ENCODE measurements at regions of chr3 and their contacts with region 1.

Region 1: GRCh38 chr3:124467980-124468902 is 262.0 kb upstream of the UMPS start:
- DNase-seq: peak in 1 of 2 donors; percentile 33
- ATAC-seq: peak in 7 of 8 donors; percentile 65 to 82 (median 75)
- H3K4me3 ChIP-seq: no peak overlapping the region
- H3K27ac ChIP-seq: no peak overlapping the region
- H3K4me1 ChIP-seq: no peaks in the 10 kb centered on the region
- H3K27me3 ChIP-seq: no peaks in the 10 kb centered on the region
- CTCF ChIP-seq: peak; percentile 88 to 97 (median 96)

Region 2: DNA sequence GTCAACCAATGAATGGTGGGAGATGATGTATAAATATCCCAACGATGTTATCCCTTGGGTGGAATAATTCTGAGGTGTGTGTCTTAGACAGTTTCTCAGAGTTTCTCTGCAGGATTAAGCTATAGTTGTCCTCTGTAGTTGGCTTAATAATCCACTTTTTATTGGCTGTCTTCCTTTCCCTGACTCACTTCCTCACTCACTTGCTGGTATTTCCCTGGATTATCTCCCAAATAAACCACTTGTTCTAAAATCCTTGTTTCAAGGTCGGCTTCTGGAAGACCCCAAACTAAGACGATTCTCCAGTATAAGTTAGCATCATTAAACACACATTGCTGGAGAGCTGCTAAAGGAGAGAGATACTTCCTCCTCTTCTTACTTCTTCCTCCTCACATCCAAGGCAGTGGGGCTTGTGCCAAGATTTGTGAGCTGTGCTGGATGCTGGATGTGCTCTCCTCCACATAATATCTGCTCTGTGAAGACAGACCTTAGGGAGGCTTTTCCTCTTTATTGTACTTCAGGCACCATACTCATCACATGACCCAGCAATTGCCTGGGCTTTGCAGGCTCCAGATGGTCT is 453.8 kb before region 1 on chr3:
- intact Hi-C with region 1: loop called in 9 of 10 experiments (anchors 1 to 5 kb)
- DNase-seq: no peak
- ATAC-seq: peak in 1 of 8 donors; percentile 37
- H3K4me3 ChIP-seq: no peak overlapping the region
- H3K27ac ChIP-seq: no peak overlapping the region
- H3K4me1 ChIP-seq: peaks cover 0 to 14% (median 0%) of the 10 kb centered on the region in 9 donors
- H3K27me3 ChIP-seq: no peaks in the 10 kb centered on the region
- CTCF ChIP-seq: no peak

Region 3: DNA sequence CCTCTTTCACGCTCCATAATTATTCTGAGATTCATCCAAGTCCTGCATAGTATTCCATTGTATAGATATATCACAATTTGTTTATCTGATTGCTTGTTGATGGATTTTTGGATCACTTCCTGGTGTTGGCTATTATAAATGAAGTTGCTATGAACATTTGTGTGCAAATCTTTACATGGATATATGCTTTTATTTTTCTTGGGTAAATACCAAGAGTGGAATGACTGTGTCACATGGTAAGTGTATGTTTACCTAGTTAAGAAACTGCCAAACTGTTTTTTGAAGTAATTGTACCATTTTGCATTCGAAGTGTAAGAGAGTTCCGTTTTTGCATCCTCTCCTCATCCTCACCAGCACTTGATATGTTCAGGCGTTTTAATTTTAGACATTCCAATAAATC is 441.7 kb before region 1 on chr3:
- intact Hi-C with region 1: loop called in 1 of 10 experiments (anchors 5 kb)
- DNase-seq: no peak
- ATAC-seq: no peak
- H3K4me3 ChIP-seq: no peak overlapping the region
- H3K27ac ChIP-seq: no peak overlapping the region
- H3K4me1 ChIP-seq: no peaks in the 10 kb centered on the region
- H3K27me3 ChIP-seq: peaks cover 0 to 48% (median 0%) of the 10 kb centered on the region in 7 donors
- CTCF ChIP-seq: no peak

Region 4: DNA sequence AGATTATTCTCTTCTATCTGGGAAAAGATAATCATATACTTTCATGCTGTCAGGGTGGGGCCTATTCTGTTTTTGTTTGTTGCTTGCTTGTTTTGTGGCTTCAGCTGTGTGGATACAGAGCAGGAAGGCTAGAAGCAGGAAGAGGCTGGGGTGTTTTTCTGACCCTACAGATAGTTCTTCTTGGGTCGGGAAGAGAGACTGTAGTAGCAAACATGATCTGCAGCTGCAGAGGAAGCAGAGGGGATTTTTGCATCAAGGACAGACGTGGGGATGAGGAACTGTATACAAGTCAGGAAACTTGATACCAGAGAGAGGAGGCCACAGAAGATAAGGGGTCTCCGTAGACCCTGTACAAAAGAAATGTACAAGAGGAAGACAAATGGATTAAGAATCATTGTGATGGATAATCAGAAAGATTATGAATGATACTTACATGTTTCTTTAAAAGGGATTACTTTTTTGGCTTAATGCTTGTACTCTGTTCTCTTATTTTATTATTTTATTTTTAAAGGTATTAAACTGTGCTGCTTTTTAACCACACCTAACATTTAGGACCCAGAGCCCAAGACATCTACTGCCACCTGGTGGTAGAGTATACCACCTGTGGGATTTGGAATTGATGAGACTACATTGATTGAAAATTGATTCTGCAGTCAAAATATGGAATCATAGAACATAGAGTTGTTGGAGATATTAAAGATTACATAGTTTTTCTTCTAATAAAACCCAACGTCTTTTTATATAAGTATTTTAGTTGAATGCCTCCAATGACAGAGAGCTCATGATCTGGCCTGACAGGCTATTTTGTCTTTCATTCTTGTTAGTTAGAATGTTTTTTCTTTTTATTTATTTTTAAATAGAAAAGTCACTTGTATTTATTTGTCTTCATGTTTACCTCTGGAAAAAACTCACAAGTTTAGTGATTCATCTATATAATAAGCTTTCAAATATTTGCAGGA is 389.0 kb before region 1 on chr3:
- intact Hi-C with region 1: loop called in 1 of 10 experiments (anchors 10 kb)
- DNase-seq: no peak
- ATAC-seq: peak in 5 of 8 donors; percentile 36 to 63 (median 54)
- H3K4me3 ChIP-seq: no peak overlapping the region
- H3K27ac ChIP-seq: peak overlapping the region in 4 of 10 donors; percentile 13 to 49 (median 26)
- H3K4me1 ChIP-seq: peaks cover 0 to 63% (median 36%) of the 10 kb centered on the region in 9 donors
- H3K27me3 ChIP-seq: no peaks in the 10 kb centered on the region
- CTCF ChIP-seq: peak; percentile 69 to 87 (median 80)

Region 5: DNA sequence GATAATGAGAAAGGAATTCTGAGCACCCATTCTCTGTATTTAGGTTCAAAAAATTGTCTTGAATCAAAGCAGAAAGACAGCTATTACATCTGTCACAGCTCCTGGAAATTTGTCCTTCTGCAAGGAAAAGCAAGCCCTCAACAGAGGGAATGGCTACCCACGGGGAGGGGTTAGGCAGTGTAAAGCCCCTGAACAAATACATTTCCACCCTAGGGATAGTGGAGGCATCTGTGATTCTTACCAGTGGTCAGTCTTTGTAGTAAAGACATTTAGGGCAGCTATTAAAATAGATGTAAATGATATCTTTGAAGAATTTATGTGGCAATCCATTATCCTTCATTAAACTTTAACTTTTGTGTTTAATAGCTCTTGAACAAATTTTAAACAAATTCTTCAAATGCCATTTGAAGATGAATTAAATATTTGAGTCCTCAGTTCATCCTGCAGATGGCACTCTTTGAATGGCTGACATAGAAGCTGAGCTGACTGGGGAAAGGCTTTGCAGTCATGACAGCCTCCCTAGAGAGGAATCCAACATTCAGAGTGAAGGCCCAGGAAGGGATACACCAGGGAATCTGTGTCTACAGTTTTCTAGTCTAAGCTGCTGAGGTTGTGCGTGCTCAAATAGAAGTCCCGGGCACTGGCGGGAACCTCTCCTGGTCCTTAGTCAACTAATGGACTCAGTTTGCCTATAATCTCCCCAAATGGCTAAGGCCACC is 116.7 kb before region 1 on chr3:
- intact Hi-C with region 1: loop called (anchors 1 to 5 kb)
- DNase-seq: peak in 1 of 2 donors; percentile 52
- ATAC-seq: peak in 7 of 8 donors; percentile 63 to 88 (median 80)
- H3K4me3 ChIP-seq: no peak overlapping the region
- H3K27ac ChIP-seq: no peak overlapping the region
- H3K4me1 ChIP-seq: no peaks in the 10 kb centered on the region
- H3K27me3 ChIP-seq: no peaks in the 10 kb centered on the region
- CTCF ChIP-seq: peak; percentile 39 to 74 (median 60)

Measured in heart right ventricle (tissue), 16 donors.